ENCODE measurements at regions of chr17 and their contacts with region 1.

Region 1: GRCh38 chr17:71553381-71553780 is 567.4 kb upstream of the SOX9 start:
- DNase-seq: no peak
- H3K4me3 ChIP-seq: no peak overlapping the region
- CTCF ChIP-seq: no peak

Region 2: DNA sequence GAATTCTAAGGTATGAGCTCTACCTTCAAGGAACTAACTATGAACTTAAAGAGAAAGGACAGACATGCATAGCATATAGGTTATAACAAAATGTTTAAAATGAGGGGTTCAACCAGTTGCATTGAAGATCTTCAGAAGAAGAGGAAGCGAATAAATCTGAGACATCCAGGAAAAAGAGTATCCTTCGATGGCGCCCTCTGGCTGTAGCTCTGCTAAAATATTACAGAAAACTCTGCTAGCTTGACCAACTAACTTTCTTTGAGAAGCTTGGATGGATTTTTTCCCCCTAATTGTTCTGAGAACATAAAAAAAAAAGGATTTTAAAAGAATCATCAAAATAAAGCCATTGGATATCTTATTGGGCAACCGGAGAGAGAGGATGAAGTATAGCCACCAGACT is 92.4 kb before region 1 on chr17:
- in situ Hi-C with region 1: no loop called
- DNase-seq: peak; percentile 19
- H3K4me3 ChIP-seq: no peak overlapping the region
- CTCF ChIP-seq: peak; percentile 42

Region 3: DNA sequence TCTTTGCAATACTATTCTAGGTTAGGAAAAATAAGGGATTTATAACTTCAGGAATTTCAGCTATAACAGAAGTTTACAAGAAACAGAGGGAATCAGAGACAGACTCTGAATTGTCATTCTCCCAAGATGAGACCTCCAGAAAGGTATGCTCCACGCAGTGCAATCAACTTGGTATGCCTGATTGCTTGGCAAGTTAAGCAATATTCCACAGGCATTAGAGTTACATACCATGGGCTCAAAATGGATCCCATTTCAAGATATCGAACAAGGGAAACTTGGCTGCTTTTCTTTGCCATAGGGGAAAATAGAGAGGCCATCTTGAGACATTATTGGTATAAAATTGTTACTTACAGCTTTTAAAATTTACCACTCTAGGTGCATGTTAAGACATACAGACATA is 48.2 kb before region 1 on chr17:
- in situ Hi-C with region 1: loop called (anchors 5 kb)
- DNase-seq: no peak
- H3K4me3 ChIP-seq: no peak overlapping the region
- CTCF ChIP-seq: no peak

Region 4: DNA sequence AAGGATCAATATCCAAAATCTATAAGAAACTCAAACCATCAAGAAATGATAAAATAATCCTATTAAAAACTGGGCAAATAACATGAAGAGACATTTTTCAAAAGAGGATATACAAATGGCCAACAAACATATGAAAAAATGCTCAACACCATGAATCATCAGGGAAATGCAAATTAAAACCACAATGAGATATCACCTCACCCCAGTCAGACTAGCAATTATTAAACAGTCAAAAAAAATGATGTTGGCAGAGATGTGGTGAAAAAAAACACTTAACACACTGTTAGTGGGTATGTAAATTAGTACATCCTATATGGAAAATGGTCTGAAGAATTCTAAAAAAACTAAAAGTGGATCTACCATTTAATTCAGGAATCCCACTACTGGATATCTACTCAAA is 188.5 kb after region 1 on chr17:
- in situ Hi-C with region 1: no loop called
- DNase-seq: no peak
- H3K4me3 ChIP-seq: no peak overlapping the region
- CTCF ChIP-seq: no peak

Measured in astrocyte of the cerebellum (primary cell).